Lower lobe of right lung (tissue), 2 donors: ENCODE measurements at regions of chr1 and their contacts with region 1.

Region 1: DNA sequence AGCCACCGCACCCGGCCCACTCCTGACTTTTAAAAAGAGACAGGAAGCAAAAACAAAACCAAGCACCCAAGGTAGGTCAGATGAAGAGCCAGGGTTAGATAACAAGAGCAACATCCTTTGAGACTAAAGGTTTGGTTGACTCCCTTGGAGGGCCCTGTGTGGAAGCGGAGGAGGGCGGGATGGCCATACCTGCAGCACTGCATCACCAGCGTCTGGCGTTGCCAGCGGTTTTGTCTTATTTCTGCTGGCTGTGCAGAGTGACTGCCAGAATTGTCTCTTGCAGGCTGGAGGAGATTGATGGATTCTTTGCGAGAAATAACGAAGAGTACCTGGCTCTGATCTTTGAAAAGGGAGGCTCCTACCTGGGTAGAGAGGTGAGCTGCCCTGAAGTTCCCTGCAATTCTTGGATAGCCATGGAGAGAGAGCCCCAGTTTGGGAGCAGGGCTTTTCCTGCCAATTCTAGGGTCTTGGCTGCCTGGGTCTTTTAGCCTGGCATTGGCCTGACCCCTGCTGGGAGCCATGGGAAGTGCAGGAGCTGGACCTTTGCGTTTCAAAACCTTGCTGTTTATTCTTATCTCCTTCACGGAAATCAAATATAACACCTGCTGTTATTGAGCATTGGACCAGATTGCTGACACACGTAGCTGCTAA is 24.0 kb downstream of the QSOX1 start:
- DNase-seq: peak; percentile 67
- ATAC-seq: peak; percentile 74 to 76
- H3K4me3 ChIP-seq: no peak overlapping the region
- H3K27ac ChIP-seq: no peak overlapping the region
- H3K4me1 ChIP-seq: peaks cover 9% of the 10 kb centered on the region
- H3K27me3 ChIP-seq: no peaks in the 10 kb centered on the region
- CTCF ChIP-seq: peak; percentile 96

Region 2: GRCh38 chr1:180092931-180093559 is 85.6 kb before region 1 on chr1:
- intact Hi-C with region 1: loop called (anchors 10 kb)
- DNase-seq: no peak
- ATAC-seq: no peak
- H3K4me3 ChIP-seq: no peak overlapping the region
- H3K27ac ChIP-seq: no peak overlapping the region
- H3K4me1 ChIP-seq: peaks cover 2% of the 10 kb centered on the region
- H3K27me3 ChIP-seq: no peaks in the 10 kb centered on the region
- CTCF ChIP-seq: no peak